Calu3 (cell line): ENCODE measurements at regions of chr11 and their contacts with region 1.

Region 1: DNA sequence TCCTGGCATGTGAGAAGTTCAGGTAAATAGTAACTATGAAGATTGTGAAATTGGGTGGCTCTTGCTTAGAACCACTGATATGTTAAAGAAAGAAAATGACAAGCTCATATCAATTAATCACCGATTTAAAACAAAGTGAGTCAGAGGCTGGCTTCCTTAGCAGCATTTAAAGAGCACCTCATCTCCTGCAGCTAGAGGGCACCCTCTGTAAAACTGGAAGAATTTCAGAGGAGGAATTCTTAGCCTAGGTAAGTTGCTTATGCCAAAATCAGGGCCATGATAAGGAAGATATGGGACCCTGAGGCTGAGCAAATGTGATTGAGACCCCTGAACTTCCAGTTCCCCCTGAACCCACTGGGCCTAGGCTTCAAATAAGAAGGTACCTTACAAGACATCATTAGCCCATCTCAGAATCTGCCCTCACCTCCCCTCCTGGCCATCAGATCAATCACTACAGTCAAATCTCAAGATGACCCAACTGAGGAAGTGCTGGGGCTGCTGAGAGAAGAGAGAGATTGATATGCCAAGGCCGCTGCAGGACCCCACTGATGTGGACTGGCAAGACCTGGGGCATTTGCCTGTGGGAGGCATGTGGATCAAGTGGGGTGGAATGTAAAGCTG is 8.6 kb upstream of the CD3E start:
- DNase-seq: peak; percentile 38
- H3K4me3 Mint-ChIP-seq: no peak overlapping the region
- H3K27ac Mint-ChIP-seq: no peak overlapping the region
- H3K4me1 Mint-ChIP-seq: peaks cover 24% of the 10 kb centered on the region
- H3K27me3 Mint-ChIP-seq: peaks cover 13% of the 10 kb centered on the region
- CTCF ChIP-seq: no peak

Region 2: DNA sequence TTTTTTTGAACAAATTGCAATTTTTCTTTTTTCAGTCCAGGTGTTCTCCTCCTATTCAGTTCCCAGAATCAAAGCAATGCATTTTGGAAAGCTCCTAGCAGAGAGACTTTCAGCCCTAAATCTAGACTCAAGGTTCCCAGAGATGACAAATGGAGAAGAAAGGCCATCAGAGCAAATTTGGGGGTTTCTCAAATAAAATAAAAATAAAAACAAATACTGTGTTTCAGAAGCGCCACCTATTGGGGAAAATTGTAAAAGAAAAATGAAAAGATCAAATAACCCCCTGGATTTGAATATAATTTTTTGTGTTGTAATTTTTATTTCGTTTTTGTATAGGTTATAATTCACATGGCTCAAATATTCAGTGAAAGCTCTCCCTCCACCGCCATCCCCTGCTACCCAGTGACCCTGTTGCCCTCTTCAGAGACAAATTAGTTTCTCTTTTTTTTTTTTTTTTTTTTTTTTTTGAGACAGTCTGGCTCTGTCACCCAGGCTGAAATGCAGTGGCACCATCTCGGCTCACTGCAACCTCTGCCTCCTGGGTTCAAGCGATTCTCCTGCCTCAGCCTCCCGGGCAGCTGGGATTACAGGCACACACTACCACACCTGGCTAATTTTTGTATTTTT is 57.3 kb after region 1 on chr11:
- CTCF ChIA-PET with region 1: interaction called, 8 read pairs
- intact Hi-C with region 1: loop called (anchors 1 kb)
- DNase-seq: no peak
- H3K4me3 Mint-ChIP-seq: no peak overlapping the region
- H3K27ac Mint-ChIP-seq: no peak overlapping the region
- H3K4me1 Mint-ChIP-seq: peaks cover 7% of the 10 kb centered on the region
- H3K27me3 Mint-ChIP-seq: peaks cover 49% of the 10 kb centered on the region
- CTCF ChIP-seq: no peak

Region 3: GRCh38 chr11:118366287-118366686 is 70.3 kb after region 1 on chr11:
- CTCF ChIA-PET with region 1: no interaction called
- intact Hi-C with region 1: no loop called
- DNase-seq: no peak
- H3K4me3 Mint-ChIP-seq: no peak overlapping the region
- H3K27ac Mint-ChIP-seq: no peak overlapping the region
- H3K4me1 Mint-ChIP-seq: peaks cover 9% of the 10 kb centered on the region
- H3K27me3 Mint-ChIP-seq: no peaks in the 10 kb centered on the region
- CTCF ChIP-seq: no peak

Region 4: GRCh38 chr11:118471030-118471429 is 175.1 kb after region 1 on chr11:
- CTCF ChIA-PET with region 1: no interaction called
- intact Hi-C with region 1: no loop called
- DNase-seq: no peak
- H3K4me3 Mint-ChIP-seq: no peak overlapping the region
- H3K27ac Mint-ChIP-seq: no peak overlapping the region
- H3K4me1 Mint-ChIP-seq: no peaks in the 10 kb centered on the region
- H3K27me3 Mint-ChIP-seq: no peaks in the 10 kb centered on the region
- CTCF ChIP-seq: no peak

Region 5: DNA sequence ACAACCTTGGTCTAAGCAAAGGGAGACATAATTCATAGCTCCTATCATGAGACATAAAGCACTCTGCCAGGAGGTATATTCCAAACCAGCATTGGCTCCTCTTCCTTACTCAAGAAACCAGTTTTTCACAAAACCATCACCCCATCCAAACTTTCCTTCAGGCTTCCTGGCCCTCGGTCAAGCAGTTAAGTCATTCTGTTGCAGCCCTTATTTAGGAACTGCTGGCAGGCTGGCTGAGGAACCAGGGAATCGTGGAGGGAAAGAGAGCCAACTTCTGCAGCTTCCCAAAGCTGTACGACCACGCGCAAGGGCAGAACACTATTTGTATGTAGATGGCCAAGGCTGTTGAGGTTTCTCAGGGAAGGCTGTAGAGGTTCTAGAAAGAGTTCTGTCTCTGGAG is 269.1 kb after region 1 on chr11:
- CTCF ChIA-PET with region 1: no interaction called
- intact Hi-C with region 1: loop called (anchors 5 kb)
- DNase-seq: no peak
- H3K4me3 Mint-ChIP-seq: peak overlapping the region; percentile 76
- H3K27ac Mint-ChIP-seq: no peak overlapping the region
- H3K4me1 Mint-ChIP-seq: no peaks in the 10 kb centered on the region
- H3K27me3 Mint-ChIP-seq: no peaks in the 10 kb centered on the region
- CTCF ChIP-seq: no peak